ENCODE measurements at regions of chr17 and their contacts with region 1.

Region 1: DNA sequence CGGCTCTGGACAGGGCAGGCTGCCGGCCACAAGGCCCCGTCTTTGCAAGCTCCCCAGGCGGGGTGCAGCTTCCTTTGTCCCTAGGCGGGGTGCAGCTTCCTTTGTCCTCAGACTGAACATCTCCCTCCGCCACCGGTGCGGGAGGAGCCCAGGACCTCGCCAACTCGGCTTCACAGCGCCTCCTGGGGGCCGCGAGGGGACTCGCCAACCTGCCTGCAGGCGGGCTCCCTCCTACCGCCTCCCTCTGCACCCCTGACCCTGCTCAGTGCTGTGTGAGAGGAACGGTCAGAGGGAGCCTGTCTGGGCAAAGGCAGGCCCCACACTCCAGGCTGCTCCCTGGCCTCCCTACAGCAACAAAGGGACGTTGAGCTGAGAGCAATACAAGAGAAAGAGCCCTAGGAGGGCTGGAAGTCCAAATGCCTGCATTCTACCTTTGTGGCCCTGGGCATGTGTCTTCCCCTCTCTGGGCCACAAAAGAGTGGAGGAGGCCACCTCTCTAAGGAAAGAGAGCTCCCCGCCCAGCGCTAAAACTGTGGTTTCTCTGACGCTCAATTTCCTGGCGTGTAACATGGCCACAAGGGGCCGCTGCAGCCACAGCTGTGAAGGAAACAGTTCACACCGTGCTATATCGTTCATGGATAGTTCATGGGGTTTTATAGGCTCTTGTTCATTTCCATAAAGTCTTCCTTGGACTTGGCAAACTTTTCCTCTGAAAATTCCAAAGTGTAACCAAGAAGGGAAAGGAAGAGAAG is 20.9 kb upstream of the KRT19 start:
- DNase-seq: peak; percentile 83
- ATAC-seq: peak; percentile 79
- H3K4me3 ChIP-seq: peak overlapping the region; percentile 6 to 46; a peak in 3 of 4 replicates
- H3K27ac ChIP-seq: peak overlapping the region; percentile 91
- H3K4me1 ChIP-seq: peaks cover 39 to 79% of the 10 kb centered on the region in 2 experiments
- H3K27me3 ChIP-seq: no peaks in the 10 kb centered on the region
- CTCF ChIP-seq: peak; percentile 86 to 98 (median 88)
- POLR2A ChIP-seq: no peak
- RAD21 ChIP-seq: peak; percentile 95

Region 2: DNA sequence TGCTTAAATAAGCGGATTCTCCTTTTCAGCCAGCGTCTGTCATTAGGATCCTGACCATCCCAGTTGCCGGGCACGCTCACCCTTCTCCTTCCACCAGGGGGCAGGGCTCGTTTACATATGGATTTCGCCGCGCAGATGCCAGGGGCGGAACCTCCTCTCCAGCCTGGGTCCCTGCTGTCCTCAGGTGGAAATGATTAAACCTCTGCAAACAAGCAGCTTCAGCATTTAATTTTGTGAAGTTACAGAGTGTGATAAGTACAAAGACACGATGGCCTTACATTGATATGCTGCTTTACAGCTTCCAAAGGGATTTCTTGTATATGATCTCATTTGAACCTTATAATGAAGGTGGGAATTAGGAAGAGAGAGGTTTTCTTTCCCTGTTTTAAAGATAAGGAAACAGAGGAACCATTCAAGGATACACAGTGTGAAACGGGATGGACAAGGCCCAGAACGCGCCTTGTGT is 745.4 kb before region 1 on chr17:
- CTCF ChIA-PET with region 1: interaction called, 14 read pairs
- POLR2A ChIA-PET with region 1: no interaction called
- RAD21 ChIA-PET with region 1: interaction called in 1 of 2 experiments, 3 read pairs
- intact Hi-C with region 1: loop called (anchors 1 kb)
- DNase-seq: peak; percentile 74
- ATAC-seq: peak; percentile 99
- H3K4me3 ChIP-seq: no peak overlapping the region
- H3K27ac ChIP-seq: no peak overlapping the region
- H3K4me1 ChIP-seq: peaks cover 3 to 9% of the 10 kb centered on the region in 2 experiments; a peak in 3 of 4 replicates
- H3K27me3 ChIP-seq: no peaks in the 10 kb centered on the region
- CTCF ChIP-seq: peak; percentile 82 to 96 (median 88)
- POLR2A ChIP-seq: no peak
- RAD21 ChIP-seq: peak; percentile 98

Region 3: GRCh38 chr17:41322094-41322902 is 226.7 kb before region 1 on chr17:
- CTCF ChIA-PET with region 1: interaction called, 3 read pairs
- POLR2A ChIA-PET with region 1: no interaction called
- RAD21 ChIA-PET with region 1: no interaction called
- intact Hi-C with region 1: loop called (anchors 5 kb)
- DNase-seq: peak; percentile 35
- ATAC-seq: peak; percentile 46
- H3K4me3 ChIP-seq: no peak overlapping the region
- H3K27ac ChIP-seq: peak overlapping the region; percentile 35
- H3K4me1 ChIP-seq: peaks cover 5 to 18% of the 10 kb centered on the region in 2 experiments; a peak in 3 of 4 replicates
- H3K27me3 ChIP-seq: no peaks in the 10 kb centered on the region
- CTCF ChIP-seq: peak; percentile 52 to 67 (median 61); a peak in 5 of 6 replicates
- POLR2A ChIP-seq: no peak
- RAD21 ChIP-seq: peak; percentile 82

Region 4: DNA sequence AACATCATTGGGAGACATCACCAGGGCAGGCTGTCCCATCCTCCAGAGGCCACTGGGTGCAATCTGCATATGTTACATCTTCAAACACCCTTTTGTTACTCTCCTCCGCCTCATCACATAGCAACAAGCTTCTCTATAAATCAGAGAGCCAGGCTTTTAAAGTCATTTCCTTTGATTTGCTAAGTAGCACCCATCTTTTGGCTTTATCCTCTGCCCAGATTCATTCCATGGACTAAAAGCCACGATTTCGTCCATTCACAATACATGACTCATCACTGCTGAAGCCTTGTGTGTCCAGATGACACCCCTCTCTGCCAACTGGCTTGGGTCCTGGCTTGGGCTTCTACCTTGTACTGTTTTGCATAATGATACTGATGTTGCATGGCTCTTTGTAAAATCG is 106.3 kb before region 1 on chr17:
- CTCF ChIA-PET with region 1: no interaction called
- POLR2A ChIA-PET with region 1: no interaction called
- RAD21 ChIA-PET with region 1: no interaction called
- intact Hi-C with region 1: no loop called
- DNase-seq: no peak
- ATAC-seq: no peak
- H3K4me3 ChIP-seq: no peak overlapping the region
- H3K27ac ChIP-seq: no peak overlapping the region
- H3K4me1 ChIP-seq: peaks cover 0 to 7% of the 10 kb centered on the region in 2 experiments; a peak in 1 of 4 replicates
- H3K27me3 ChIP-seq: no peaks in the 10 kb centered on the region
- CTCF ChIP-seq: no peak
- POLR2A ChIP-seq: no peak
- RAD21 ChIP-seq: no peak

Region 5: DNA sequence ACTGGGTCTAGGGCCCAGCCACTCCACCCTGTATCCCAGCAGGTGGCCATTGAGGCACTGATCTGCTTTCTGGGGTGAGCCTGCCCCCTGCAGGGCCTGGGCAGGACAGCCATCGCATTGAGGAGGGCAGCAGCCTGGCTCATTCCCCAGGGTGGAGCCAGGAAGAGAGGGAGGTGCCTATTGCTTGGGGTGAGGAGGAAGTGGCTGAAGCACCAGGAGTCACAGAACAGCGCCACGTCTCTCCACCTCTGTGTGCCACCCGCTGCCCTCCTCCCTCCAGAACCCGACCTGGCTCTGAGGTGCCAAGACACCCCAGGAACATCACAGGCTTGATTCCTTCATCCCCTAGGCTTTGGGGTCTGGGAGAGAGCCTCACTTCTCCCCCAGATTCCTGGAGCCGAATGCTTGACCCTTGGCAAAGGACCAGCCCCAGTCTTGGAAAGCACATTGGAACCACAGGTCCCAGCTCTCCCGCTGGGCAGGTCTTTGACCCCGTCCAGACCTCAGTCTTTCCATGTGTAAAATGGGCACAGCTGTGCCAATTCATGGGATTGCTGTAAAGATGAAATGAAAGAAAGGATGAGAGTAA is 52.1 kb before region 1 on chr17:
- CTCF ChIA-PET with region 1: interaction called, 23 read pairs
- POLR2A ChIA-PET with region 1: no interaction called
- RAD21 ChIA-PET with region 1: interaction called, 4 to 7 read pairs
- intact Hi-C with region 1: loop called (anchors 2 kb)
- DNase-seq: peak; percentile 87
- ATAC-seq: peak; percentile 93
- H3K4me3 ChIP-seq: peak overlapping the region in 1 of 2 experiments; percentile 25; a peak in 1 of 4 replicates
- H3K27ac ChIP-seq: peak overlapping the region; percentile 61
- H3K4me1 ChIP-seq: peaks cover 34 to 90% of the 10 kb centered on the region in 2 experiments
- H3K27me3 ChIP-seq: no peaks in the 10 kb centered on the region
- CTCF ChIP-seq: peak; percentile 94 to 96 (median 95)
- POLR2A ChIP-seq: peak; percentile 74
- RAD21 ChIP-seq: peak; percentile 100

Region 6: DNA sequence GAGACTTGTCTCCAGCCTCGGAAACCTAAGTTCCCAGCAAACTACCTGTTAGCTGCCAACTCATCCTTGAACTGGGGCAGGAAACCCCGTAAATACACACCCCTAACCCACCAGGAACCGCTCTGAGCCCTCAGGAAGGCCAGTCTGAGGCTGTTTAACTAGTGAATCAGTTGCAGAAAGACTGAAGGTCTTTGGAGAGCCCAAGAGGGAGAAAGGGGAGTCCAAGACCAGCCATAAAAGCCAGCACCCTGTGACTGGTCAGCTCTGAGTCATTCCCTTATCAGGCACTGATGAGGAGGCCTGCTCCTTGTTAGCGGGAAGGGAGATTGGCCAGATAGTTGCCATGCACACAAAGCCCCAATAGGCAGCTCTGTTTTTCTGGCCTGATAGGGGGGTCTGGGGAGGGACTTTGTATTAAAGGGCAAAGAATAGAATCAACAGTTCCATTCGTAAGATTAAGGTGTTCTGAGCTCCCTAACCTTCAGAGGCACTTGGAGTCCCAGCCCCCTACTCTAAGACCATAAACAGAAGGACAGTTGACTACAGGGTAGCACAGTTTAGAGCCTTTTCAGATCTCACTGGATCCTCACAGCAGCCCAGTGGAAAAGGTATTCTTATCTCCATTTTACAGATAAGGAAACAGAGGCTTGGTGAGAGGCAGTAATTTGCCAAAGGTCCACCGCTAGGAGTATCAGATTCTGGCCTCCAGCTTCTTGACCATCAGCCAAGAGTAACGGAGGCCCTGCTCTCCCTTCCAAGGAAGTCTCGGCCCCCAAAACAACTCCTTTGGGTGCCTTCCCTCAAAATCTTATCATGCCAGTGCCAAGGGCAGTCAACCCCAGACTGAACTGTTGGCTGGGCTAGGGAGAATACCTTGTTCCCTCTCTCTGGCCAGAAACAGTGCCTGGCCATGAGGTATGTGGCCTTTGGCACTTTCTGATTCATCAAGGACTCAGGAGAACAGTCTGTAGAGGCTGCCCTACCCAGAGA is 18.7 kb before region 1 on chr17:
- CTCF ChIA-PET with region 1: interaction called, 77 read pairs
- POLR2A ChIA-PET with region 1: interaction called, 148 read pairs
- RAD21 ChIA-PET with region 1: interaction called, 5 to 8 read pairs
- intact Hi-C with region 1: no loop called
- DNase-seq: peak; percentile 86
- ATAC-seq: peak; percentile 66
- H3K4me3 ChIP-seq: peak overlapping the region; percentile 18 to 95
- H3K27ac ChIP-seq: peak overlapping the region; percentile 99
- H3K4me1 ChIP-seq: peaks cover 36 to 73% of the 10 kb centered on the region in 2 experiments
- H3K27me3 ChIP-seq: no peaks in the 10 kb centered on the region
- CTCF ChIP-seq: no peak
- POLR2A ChIP-seq: peak; percentile 45
- RAD21 ChIP-seq: no peak

Region 7: DNA sequence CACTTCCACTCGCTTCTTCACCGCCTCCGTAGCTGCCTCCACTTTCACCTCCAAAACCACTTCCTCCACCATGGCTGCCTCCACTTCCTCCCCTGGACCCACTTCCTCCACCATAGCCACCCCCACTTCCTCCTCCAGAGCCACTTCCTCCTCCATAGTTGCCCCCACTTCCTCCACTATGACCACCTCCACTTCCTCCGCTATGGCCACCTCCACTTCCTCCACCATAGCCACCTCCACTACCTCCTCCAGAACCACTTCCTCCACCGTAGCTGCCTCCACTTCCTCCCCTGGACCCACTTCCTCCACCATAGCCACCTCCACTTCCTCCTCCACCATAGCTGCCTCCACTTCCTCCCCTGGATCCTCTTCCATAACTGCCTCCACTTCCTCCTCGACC is 18.3 kb after region 1 on chr17:
- CTCF ChIA-PET with region 1: interaction called, 23 read pairs
- POLR2A ChIA-PET with region 1: no interaction called
- RAD21 ChIA-PET with region 1: no interaction called
- intact Hi-C with region 1: no loop called
- DNase-seq: no peak
- ATAC-seq: no peak
- H3K4me3 ChIP-seq: no peak overlapping the region
- H3K27ac ChIP-seq: no peak overlapping the region
- H3K4me1 ChIP-seq: no peaks in the 10 kb centered on the region
- H3K27me3 ChIP-seq: no peaks in the 10 kb centered on the region
- CTCF ChIP-seq: no peak
- POLR2A ChIP-seq: no peak
- RAD21 ChIP-seq: no peak

Region 8: GRCh38 chr17:41665566-41666236 is 116.7 kb after region 1 on chr17:
- CTCF ChIA-PET with region 1: interaction called, 203 read pairs
- POLR2A ChIA-PET with region 1: interaction called, 8 read pairs
- RAD21 ChIA-PET with region 1: interaction called, 16 to 26 read pairs
- intact Hi-C with region 1: loop called (anchors 1 kb)
- DNase-seq: peak; percentile 66
- ATAC-seq: peak; percentile 84
- H3K4me3 ChIP-seq: peak overlapping the region; percentile 44 to 57
- H3K27ac ChIP-seq: peak overlapping the region; percentile 69
- H3K4me1 ChIP-seq: peaks cover 14 to 61% of the 10 kb centered on the region in 2 experiments
- H3K27me3 ChIP-seq: no peaks in the 10 kb centered on the region
- CTCF ChIP-seq: peak; percentile 70 to 94 (median 92)
- POLR2A ChIP-seq: peak; percentile 30
- RAD21 ChIP-seq: peak; percentile 42; the same call in 1 of the 2 replicates

Region 9: GRCh38 chr17:41930009-41930832 is 381.2 kb after region 1 on chr17 and contains the start of gene ODAD4:
- CTCF ChIA-PET with region 1: no interaction called
- POLR2A ChIA-PET with region 1: no interaction called
- RAD21 ChIA-PET with region 1: no interaction called
- intact Hi-C with region 1: no loop called
- DNase-seq: peak; percentile 89
- ATAC-seq: peak; percentile 99
- H3K4me3 ChIP-seq: peak within 1 kb of the TSS; percentile 67 to 78
- H3K27ac ChIP-seq: peak within 1 kb of the TSS; percentile 84
- H3K4me1 ChIP-seq: peaks cover 3 to 18% of the 10 kb centered on the region in 2 experiments; a peak in 2 of 4 replicates
- H3K27me3 ChIP-seq: no peaks in the 10 kb centered on the region
- CTCF ChIP-seq: peak in 2 of 3 experiments; percentile 41 to 44; a peak in 4 of 6 replicates
- POLR2A ChIP-seq: peak; percentile 92
- RAD21 ChIP-seq: no peak; the same call in 1 of the 2 replicates
- total RNA-seq, gene ODAD4: 0.98 TPM

Measured in HCT116 (cell line).